RWPE1 (cell line): ENCODE measurements at regions of chr2 and their contacts with region 1.

Region 1: GRCh38 chr2:71331581-71332434 is at the start of gene ZNF638:
- DNase-seq: peak; percentile 95
- H3K27ac ChIP-seq: peak within 1 kb of the TSS; percentile 82
- CTCF ChIP-seq: peak; percentile 92

Region 2: GRCh38 chr2:71299507-71299906 is 32.3 kb before region 1 on chr2:
- CTCF ChIA-PET with region 1: interaction called, 12 read pairs
- POLR2A ChIA-PET with region 1: no interaction called
- DNase-seq: peak; percentile 31
- H3K27ac ChIP-seq: no peak overlapping the region
- CTCF ChIP-seq: peak; percentile 74